GM10248 (cell line): ENCODE measurements at regions of chr1 and their contacts with region 1.

Region 1: DNA sequence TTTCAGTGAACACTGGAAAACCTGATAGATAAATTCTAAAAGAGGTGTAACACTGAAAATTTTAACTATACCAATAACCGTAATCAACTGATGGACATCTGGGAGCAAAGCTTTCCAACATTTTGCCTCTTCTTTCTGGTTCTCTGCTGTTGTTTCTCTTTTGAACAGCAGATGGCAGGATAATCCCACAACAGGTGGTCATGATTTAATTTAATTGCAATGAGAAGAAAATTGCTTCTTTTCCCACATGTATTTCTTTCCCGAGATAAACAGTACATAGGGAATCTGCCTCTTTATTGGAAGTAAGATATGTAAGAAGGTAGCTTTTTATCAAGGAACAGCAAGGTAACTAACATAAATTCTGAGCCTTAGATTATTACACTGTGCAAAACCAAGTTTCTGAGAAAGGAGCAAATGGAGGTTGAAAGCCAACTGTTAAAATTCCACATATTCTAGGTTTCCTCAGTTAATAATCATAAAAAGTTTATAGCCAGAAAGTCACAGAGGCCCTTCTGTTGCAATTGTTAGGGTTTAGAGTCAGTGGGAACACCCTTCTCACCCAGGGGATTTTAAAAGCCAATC is 72.9 kb downstream of the RPS6KA1 start:
- DNase-seq: peak; percentile 65
- CTCF ChIP-seq: peak; percentile 74

Region 2: GRCh38 chr1:26493267-26493666 is 109.2 kb before region 1 on chr1:
- CTCF ChIA-PET with region 1: no interaction called
- POLR2A ChIA-PET with region 1: no interaction called
- DNase-seq: no peak
- CTCF ChIP-seq: no peak

Region 3: DNA sequence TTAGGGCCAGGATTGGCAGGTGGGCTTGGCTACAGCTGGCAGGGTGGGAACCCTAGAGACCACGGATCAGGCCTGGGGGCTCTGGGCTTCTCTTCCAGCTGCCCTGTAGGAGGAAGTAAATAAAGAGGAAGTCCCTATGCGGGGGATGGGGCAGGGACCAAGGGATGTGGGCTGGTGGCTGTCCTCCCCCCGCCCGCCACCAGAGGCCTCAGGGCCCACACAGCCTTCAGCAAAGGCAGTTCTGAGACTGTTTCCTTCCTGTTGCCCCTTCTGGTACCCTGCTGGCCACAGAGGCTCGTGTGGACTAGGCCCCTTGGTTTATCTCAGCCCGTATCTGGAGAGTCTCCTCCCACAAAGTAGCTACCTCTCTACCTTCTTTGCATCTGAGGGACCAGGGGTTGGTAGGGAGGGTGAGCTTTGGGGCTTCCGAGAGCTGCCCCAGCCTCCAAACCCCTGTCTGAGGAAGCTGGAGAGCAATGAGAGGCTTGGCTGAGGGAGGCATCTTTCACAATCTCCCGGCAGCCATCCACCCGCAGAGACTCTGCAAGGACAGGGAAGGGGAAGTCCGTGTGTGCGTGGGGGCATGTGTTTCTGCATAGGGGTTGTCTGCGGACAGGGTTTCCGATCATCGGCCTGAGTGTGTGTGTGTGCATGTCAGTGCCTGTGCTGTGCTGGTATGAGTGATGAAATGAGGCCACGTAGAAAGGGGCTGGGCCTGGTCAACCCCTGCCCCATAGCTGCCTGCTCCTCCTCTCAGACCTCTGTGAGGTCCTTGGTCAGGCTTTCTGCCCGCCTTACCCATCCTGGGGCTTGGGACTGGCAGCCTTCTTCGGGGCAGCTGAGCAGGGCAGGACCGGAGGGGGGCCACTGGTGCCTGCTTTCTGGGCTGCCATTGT is 60.4 kb before region 1 on chr1:
- CTCF ChIA-PET with region 1: interaction called, 16 read pairs
- POLR2A ChIA-PET with region 1: no interaction called
- DNase-seq: peak; percentile 91
- CTCF ChIP-seq: peak; percentile 40

Region 4: DNA sequence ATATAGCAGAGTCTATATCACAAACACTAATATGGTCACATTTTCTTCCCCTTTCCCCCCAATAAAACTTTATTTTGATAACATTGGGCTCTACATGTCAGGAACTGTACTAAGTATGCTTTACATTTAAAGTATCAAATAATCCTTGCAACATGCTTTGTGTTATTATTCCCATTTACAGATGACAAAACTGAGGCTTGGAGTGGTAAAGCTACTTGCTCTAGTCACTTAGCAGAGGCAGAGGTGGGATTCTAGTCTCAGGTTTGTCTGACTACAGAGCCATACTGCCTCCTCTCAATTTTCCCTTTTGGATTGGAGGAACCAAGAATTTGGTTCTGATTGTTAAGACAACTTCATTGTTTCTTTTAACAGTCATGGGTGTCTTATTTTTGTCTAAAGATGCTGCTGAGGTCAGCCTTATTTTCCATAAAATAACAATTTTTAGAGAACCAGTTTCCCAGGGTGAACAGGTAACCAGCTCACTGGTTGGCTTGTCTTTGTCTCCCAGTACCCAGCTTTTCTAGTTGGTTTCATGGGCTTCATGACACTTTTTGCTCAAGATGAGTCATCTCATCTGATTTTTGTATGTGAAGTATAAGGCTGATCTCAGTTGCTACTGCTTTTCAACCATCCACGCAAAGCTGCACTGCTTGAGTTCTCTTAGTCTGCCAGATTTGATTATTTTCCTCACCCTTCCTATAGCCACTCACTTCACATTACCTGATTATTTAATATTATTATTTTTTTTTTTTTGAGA is 12.4 kb after region 1 on chr1:
- CTCF ChIA-PET with region 1: interaction called, 23 read pairs
- POLR2A ChIA-PET with region 1: no interaction called
- DNase-seq: no peak
- CTCF ChIP-seq: no peak

Region 5: GRCh38 chr1:26695356-26696118 is 93.1 kb after region 1 on chr1 and contains the start of gene ARID1A:
- CTCF ChIA-PET with region 1: interaction called, 10 read pairs
- POLR2A ChIA-PET with region 1: no interaction called
- DNase-seq: peak; percentile 86
- CTCF ChIP-seq: no peak

Region 6: GRCh38 chr1:26744075-26744959 is 141.8 kb after region 1 on chr1:
- CTCF ChIA-PET with region 1: interaction called, 12 read pairs
- POLR2A ChIA-PET with region 1: interaction called, 3 read pairs
- DNase-seq: peak; percentile 84
- CTCF ChIP-seq: peak; percentile 28

Region 7: GRCh38 chr1:26794391-26794790 is 191.9 kb after region 1 on chr1:
- CTCF ChIA-PET with region 1: interaction called, 257 read pairs
- POLR2A ChIA-PET with region 1: no interaction called
- DNase-seq: no peak
- CTCF ChIP-seq: no peak

Region 8: GRCh38 chr1:26811057-26811456 is 208.6 kb after region 1 on chr1:
- CTCF ChIA-PET with region 1: interaction called, 10 read pairs
- POLR2A ChIA-PET with region 1: no interaction called
- DNase-seq: no peak
- CTCF ChIP-seq: no peak